ENCODE measurements at regions of chr5 and their contacts with region 1.

Region 1: DNA sequence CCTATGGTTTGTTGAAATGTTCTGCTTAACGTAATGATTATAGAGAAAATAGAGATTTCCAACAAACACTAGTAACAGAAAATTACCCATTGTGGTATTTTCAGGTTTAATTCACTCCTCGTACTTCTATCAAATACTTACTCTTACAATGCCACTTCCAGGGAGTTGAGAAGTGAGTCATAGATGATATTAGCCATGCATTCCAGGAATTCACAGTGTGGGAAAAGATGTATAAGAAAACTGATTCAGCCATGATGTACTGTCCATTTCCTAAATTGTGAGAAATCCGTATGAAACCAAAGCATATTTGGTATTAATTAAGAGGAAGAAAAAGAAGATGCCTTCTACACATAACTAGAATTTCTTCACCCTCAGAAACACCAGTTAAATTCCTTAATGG is 1854.6 kb upstream of the WWC1 start:
- DNase-seq: no peak
- ATAC-seq: no peak
- H3K4me3 ChIP-seq: no peak overlapping the region
- H3K4me3 Mint-ChIP-seq: no peak overlapping the region
- H3K27ac ChIP-seq: no peak overlapping the region
- H3K27ac Mint-ChIP-seq: no peak overlapping the region
- H3K4me1 ChIP-seq: no peaks in the 10 kb centered on the region
- H3K4me1 Mint-ChIP-seq: no peaks in the 10 kb centered on the region
- H3K27me3 ChIP-seq: no peaks in the 10 kb centered on the region
- H3K27me3 Mint-ChIP-seq: no peaks in the 10 kb centered on the region
- CTCF ChIP-seq: no peak

Region 2: DNA sequence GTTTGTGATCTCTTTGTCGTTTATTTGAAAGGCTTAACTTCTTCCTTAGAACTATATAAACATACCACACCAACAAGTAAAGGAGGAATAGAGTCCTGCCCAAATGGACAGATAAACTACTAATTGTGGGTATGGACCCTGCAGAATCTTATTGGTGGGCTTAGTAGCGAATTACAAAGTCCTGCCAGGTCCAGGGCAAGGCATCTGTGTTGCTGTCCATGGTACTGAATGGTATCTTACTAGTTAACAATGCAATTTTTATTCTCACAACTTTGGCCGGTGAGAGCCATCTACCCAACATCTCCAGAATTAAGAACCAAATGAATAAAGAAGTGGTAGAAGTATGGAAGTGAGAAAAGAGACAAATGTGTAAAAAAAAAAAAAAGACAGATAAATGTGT is 72.2 kb after region 1 on chr5:
- CTCF ChIA-PET with region 1: no interaction called
- POLR2A ChIA-PET with region 1: no interaction called
- intact Hi-C with region 1: loop called in 1 of 2 experiments (anchors 5 kb)
- DNase-seq: no peak
- ATAC-seq: no peak
- H3K4me3 ChIP-seq: no peak overlapping the region
- H3K4me3 Mint-ChIP-seq: no peak overlapping the region
- H3K27ac ChIP-seq: no peak overlapping the region
- H3K27ac Mint-ChIP-seq: no peak overlapping the region
- H3K4me1 ChIP-seq: no peaks in the 10 kb centered on the region
- H3K4me1 Mint-ChIP-seq: no peaks in the 10 kb centered on the region
- H3K27me3 ChIP-seq: no peaks in the 10 kb centered on the region
- H3K27me3 Mint-ChIP-seq: no peaks in the 10 kb centered on the region
- CTCF ChIP-seq: no peak

Region 3: DNA sequence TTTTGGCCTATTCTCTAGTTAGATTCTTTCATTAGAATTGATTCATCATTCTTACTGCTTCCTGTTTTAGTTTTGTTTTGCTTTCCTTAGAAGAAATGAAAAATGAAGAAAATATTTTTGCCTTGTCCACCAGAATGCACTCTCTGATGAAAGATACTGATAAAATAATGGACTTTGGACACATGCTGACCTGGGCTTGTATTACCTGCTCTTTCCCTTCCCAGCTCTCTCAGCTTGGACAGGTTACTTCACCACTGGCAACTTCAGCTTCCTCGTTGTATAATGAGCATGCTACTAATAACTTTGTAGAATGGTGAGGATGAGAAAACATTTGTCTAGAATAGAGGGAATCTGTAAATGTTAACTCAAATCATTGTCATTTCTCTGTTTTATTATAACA is 386.5 kb after region 1 on chr5:
- CTCF ChIA-PET with region 1: no interaction called
- POLR2A ChIA-PET with region 1: no interaction called
- intact Hi-C with region 1: no loop called
- DNase-seq: no peak
- ATAC-seq: no peak
- H3K4me3 ChIP-seq: no peak overlapping the region
- H3K4me3 Mint-ChIP-seq: no peak overlapping the region
- H3K27ac ChIP-seq: no peak overlapping the region
- H3K27ac Mint-ChIP-seq: no peak overlapping the region
- H3K4me1 ChIP-seq: no peaks in the 10 kb centered on the region
- H3K4me1 Mint-ChIP-seq: no peaks in the 10 kb centered on the region
- H3K27me3 ChIP-seq: no peaks in the 10 kb centered on the region
- H3K27me3 Mint-ChIP-seq: no peaks in the 10 kb centered on the region
- CTCF ChIP-seq: no peak

Measured in CD8-positive, alpha-beta T cell (primary cell).